Activated CD8-positive, alpha-beta T cell treated with anti-CD3 and anti-CD28 coated beads, Interleukin-2, amount 10 ng/mL, durations not matched to agents 7 days and 5 days (primary cell): ENCODE measurements at regions of chrX and their contacts with region 1.

Region 1: DNA sequence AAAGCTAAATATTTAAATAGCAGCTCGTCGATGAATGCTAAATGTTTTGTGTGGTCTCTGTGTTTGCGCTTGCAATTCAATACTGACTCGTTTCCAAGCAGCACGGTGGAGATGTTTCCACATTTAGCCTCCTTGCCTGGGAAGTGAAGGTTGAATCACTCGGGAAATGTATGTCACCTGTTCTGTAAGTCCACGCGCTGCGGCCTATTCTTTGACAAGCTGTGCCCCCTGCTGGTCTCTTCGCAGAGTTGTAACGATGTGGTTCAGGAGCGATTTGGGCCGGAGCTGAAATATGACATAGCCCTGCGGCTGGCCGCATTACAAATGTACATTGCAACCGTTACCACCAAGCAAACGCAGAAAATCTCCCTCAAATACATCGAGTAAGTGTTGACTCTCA is 89.6 kb upstream of the PRPS2 start:
- DNase-seq: peak; percentile 54
- ATAC-seq: no peak
- H3K4me3 Mint-ChIP-seq: no peak overlapping the region
- H3K27ac Mint-ChIP-seq: no peak overlapping the region
- H3K4me1 Mint-ChIP-seq: no peaks in the 10 kb centered on the region
- H3K27me3 Mint-ChIP-seq: peaks cover 3% of the 10 kb centered on the region

Region 2: DNA sequence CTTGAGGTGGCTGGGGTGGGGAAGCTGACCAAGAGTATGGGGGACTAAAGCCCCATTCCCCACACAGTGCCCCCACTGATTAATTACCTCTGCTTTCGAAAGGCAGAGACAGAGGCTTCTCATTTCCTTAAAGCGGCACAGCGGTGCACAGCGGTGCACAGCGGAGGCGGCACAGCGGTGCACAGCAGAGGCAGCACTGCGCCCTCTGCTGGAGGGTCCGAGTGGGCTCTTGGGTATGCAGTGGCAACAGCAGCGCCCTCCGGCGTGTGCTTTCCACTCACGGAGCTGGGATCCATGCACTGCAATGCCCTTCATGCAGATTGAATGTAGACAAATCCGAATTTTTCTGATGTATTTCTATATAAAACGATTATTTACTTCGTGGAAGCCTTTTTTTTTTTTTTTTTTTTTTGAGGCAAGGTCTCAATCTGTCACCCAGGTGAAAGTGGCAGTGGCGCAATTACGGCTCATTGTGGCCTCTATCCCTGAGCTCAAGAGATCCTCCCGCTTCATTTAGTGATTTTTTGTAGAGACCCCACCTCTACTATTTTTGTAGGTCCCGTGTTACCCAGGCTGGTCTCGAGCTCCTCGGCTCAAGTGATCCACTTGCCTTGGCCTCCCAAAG is 69.9 kb after region 1 on chrX:
- CTCF ChIA-PET with region 1: interaction called, 11 read pairs
- POLR2A ChIA-PET with region 1: no interaction called
- DNase-seq: peak; percentile 77
- ATAC-seq: peak; percentile 100
- H3K4me3 Mint-ChIP-seq: no peak overlapping the region
- H3K27ac Mint-ChIP-seq: no peak overlapping the region
- H3K4me1 Mint-ChIP-seq: peaks cover 11% of the 10 kb centered on the region
- H3K27me3 Mint-ChIP-seq: peaks cover 20% of the 10 kb centered on the region

Region 3: GRCh38 chrX:12901486-12901885 is 199.9 kb after region 1 on chrX:
- CTCF ChIA-PET with region 1: interaction called, 10 read pairs
- POLR2A ChIA-PET with region 1: no interaction called
- DNase-seq: peak; percentile 77
- ATAC-seq: peak; percentile 47
- H3K4me3 Mint-ChIP-seq: no peak overlapping the region
- H3K27ac Mint-ChIP-seq: no peak overlapping the region
- H3K4me1 Mint-ChIP-seq: peaks cover 2% of the 10 kb centered on the region
- H3K27me3 Mint-ChIP-seq: peaks cover 5% of the 10 kb centered on the region